Panc1 (cell line): ENCODE measurements at regions of chr14 and their contacts with region 1.

Region 1: GRCh38 chr14:87149583-87150354 is 843.2 kb downstream of the GALC start:
- DNase-seq: no peak
- ATAC-seq: no peak
- H3K4me3 ChIP-seq: no peak overlapping the region
- H3K27ac ChIP-seq: no peak overlapping the region
- H3K4me1 ChIP-seq: no peaks in the 10 kb centered on the region
- H3K27me3 ChIP-seq: no peaks in the 10 kb centered on the region
- CTCF ChIP-seq: no peak

Region 2: GRCh38 chr14:86683525-86684090 is 466.2 kb before region 1 on chr14:
- CTCF ChIA-PET with region 1: interaction called, 11 read pairs
- POLR2A ChIA-PET with region 1: no interaction called
- in situ Hi-C with region 1: no loop called
- intact Hi-C with region 1: no loop called
- DNase-seq: no peak
- ATAC-seq: no peak
- H3K4me3 ChIP-seq: no peak overlapping the region
- H3K27ac ChIP-seq: no peak overlapping the region
- H3K4me1 ChIP-seq: no peaks in the 10 kb centered on the region
- H3K27me3 ChIP-seq: no peaks in the 10 kb centered on the region
- CTCF ChIP-seq: no peak